PC-9 (cell line): ENCODE measurements at regions of chr17 and their contacts with region 1.

Region 1: DNA sequence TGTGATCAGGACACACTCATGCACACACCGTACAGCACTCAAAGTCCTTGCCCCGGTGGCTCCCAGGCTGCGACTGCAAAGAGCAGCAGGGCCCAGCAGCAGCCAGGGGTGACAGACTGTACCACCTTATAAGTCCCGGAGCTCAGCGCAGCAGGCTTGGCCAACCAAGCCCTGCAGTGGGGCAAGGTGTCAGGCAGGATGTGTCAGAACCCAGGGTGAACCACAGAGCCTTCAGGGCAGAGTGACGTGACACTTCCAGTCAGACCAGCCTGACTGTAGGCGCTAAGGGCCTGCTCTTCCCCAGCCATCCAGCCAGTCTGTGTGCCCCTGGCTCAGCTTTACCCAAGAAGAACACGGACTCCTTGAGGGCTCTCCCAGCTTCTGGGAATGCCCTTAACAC is 204.1 kb downstream of the COPRS start:
- DNase-seq: peak; percentile 87 to 93
- H3K4me3 ChIP-seq: no peak overlapping the region
- H3K27ac ChIP-seq: peak overlapping the region; percentile 56
- H3K4me1 ChIP-seq: peaks cover 18% of the 10 kb centered on the region
- H3K27me3 ChIP-seq: no peaks in the 10 kb centered on the region
- CTCF ChIP-seq: no peak

Region 2: DNA sequence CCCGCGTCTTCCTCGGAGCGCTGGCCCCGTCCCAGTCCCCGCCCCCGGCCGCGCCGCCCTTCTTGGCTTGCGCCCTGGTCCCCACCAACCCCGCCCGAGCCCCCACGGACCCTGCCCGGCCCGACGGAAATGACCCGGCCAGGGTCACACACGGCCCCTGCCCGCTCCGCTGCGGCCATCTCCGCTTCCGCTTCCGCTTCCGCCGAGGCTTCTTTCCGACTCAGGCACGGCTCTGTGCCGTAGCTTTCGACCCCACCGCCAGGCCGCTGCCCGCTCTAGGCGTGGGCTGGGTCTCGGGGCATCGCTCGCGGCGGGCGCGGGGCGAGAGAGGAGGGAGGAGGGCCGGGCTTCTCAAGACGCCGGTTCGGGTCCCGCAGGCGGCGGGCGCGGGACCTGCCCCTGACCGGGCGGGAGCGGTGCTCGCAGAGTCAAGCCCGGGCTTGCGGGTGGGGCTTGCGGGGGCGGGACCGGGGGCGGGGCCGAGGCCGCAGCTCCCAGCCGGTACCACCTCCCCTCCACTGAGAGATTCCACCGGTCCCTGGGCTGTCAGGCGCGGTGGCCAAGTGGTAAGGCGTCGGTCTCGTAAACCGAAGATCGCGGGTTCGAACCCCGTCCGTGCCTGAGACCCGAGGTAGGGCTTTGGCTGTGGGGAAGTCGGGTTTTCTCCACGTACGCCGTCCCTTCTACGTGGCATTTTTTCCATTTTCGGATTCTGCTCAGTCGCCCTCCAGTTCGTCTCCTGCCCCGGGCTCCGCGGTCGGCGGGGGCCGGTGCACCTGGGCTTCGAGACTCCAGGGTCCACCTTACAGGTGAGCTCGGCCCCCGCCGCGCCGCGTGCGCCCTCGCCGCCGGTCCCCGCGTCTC is 105.2 kb before region 1 on chr17:
- CTCF ChIA-PET with region 1: no interaction called
- POLR2A ChIA-PET with region 1: no interaction called
- intact Hi-C with region 1: loop called (anchors 10 kb)
- DNase-seq: peak; percentile 81 to 92
- H3K4me3 ChIP-seq: peak overlapping the region; percentile 93
- H3K27ac ChIP-seq: peak overlapping the region; percentile 36
- H3K4me1 ChIP-seq: 0 out of 2 replicates have a peak, but pooled peaks cover 10% of the 10 kb centered on the region
- H3K27me3 ChIP-seq: no peaks in the 10 kb centered on the region
- CTCF ChIP-seq: no peak

Region 3: DNA sequence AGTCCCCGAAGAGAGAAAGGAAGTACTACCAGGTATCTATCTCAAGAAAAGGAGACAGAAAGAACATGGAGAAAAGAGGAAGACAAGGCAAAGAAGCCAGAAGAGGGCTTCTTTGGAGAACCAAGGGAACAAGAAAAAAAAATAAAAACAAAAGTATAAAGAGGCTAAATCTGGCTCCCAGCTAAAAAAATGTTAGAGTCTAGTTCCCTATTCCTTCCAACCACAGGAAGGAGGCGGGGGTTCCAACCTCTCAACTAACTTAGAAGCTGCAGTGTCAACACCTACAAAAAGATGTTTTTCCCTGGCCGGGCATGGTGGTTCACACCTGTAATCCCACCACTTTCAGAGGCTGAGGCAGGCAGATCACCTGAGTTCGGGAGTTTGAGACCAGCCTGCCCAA is 233.2 kb after region 1 on chr17:
- CTCF ChIA-PET with region 1: no interaction called
- POLR2A ChIA-PET with region 1: interaction called, 12 read pairs
- intact Hi-C with region 1: no loop called
- DNase-seq: no peak
- H3K4me3 ChIP-seq: no peak overlapping the region
- H3K27ac ChIP-seq: no peak overlapping the region
- H3K4me1 ChIP-seq: no peaks in the 10 kb centered on the region
- H3K27me3 ChIP-seq: no peaks in the 10 kb centered on the region
- CTCF ChIP-seq: no peak